Activated T-helper 1 cell treated with anti-CD3 and anti-CD28 coated beads, Interleukin-12 subunit alpha, Interleukin-12 subunit beta, Interleukin-2, Interleukin-4 antibody, amounts not matched to agents 30 ng/mL and 10 ng/mL and 1 ng/mL, durations not matched to agents 14 hours and 24 hours and 36 hours (primary cell): ENCODE measurements at regions of chr2 and their contacts with region 1.

Region 1: DNA sequence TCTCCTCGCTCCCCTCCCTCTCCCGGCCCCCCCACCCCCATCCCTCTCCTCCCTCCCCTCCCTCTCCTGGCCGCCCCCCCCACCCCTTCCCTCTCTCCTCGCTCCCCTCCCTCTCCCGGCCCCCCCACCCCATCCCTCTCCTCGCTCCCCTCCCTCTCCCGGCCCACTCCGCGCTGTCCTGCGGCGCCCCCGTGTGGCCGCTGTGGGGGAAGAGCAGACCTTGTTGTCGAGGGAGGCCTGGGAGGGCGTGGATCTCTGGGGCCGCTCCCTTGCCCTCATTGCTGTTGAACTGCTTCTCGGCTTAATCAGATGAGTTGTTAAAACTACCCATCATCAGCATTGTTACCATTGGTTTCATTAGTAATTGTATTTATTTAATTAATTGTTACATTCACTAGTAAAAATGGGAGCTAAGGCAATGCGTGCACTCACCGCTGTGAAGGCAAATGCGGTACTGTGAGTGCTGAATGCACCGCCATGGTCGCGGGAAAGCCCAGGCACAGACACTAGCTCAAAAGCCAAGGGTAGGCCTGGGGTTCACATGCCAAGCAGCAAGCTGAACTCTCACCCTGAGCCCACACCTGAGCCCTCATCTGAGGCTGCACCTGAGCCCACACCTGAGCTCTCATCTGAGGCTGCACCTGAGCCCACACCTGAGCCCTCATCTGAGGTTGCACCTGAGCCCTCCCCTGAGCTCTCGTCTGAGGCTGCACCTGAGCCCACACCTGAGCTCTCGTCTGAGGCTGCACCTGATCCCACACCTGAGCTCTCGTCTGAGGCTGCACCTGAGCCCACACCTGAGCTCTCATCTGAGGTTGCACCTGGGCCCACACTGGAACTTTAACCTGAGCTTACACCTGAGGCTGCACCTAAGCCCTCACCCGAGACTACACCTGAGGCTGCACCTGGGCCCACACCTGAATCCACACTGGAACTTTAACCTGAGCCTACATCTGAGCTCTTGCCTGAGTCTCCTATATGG is 8.8 kb downstream of the RTP5 start:
- DNase-seq: peak; percentile 73
- H3K4me3 Mint-ChIP-seq: no peak overlapping the region
- H3K27ac Mint-ChIP-seq: no peak overlapping the region
- H3K4me1 Mint-ChIP-seq: peaks cover 17% of the 10 kb centered on the region
- H3K27me3 Mint-ChIP-seq: no peaks in the 10 kb centered on the region

Region 2: GRCh38 chr2:240832205-240832727 is 1046.0 kb before region 1 on chr2:
- intact Hi-C with region 1: loop called (anchors 1 kb)
- DNase-seq: peak; percentile 97
- H3K4me3 Mint-ChIP-seq: no peak overlapping the region
- H3K27ac Mint-ChIP-seq: no peak overlapping the region
- H3K4me1 Mint-ChIP-seq: no peaks in the 10 kb centered on the region
- H3K27me3 Mint-ChIP-seq: peaks cover 27% of the 10 kb centered on the region

Region 3: GRCh38 chr2:241355983-241356870 is 522.1 kb before region 1 on chr2 and contains the start of gene FARP2:
- intact Hi-C with region 1: loop called (anchors 1 kb)
- DNase-seq: peak; percentile 95
- H3K4me3 Mint-ChIP-seq: peak within 1 kb of the TSS; percentile 84
- H3K27ac Mint-ChIP-seq: peak within 1 kb of the TSS; percentile 83
- H3K4me1 Mint-ChIP-seq: peaks cover 22% of the 10 kb centered on the region
- H3K27me3 Mint-ChIP-seq: peaks cover 2% of the 10 kb centered on the region
- total RNA-seq, gene FARP2: 36.6 and 40.9 TPM in 2 replicates

Region 4: GRCh38 chr2:241609859-241610793 is 268.2 kb before region 1 on chr2:
- intact Hi-C with region 1: loop called (anchors 5 kb)
- DNase-seq: peak; percentile 88
- H3K4me3 Mint-ChIP-seq: peak overlapping the region; percentile 78
- H3K27ac Mint-ChIP-seq: peak overlapping the region; percentile 83
- H3K4me1 Mint-ChIP-seq: peaks cover 18% of the 10 kb centered on the region
- H3K27me3 Mint-ChIP-seq: no peaks in the 10 kb centered on the region

Region 5: DNA sequence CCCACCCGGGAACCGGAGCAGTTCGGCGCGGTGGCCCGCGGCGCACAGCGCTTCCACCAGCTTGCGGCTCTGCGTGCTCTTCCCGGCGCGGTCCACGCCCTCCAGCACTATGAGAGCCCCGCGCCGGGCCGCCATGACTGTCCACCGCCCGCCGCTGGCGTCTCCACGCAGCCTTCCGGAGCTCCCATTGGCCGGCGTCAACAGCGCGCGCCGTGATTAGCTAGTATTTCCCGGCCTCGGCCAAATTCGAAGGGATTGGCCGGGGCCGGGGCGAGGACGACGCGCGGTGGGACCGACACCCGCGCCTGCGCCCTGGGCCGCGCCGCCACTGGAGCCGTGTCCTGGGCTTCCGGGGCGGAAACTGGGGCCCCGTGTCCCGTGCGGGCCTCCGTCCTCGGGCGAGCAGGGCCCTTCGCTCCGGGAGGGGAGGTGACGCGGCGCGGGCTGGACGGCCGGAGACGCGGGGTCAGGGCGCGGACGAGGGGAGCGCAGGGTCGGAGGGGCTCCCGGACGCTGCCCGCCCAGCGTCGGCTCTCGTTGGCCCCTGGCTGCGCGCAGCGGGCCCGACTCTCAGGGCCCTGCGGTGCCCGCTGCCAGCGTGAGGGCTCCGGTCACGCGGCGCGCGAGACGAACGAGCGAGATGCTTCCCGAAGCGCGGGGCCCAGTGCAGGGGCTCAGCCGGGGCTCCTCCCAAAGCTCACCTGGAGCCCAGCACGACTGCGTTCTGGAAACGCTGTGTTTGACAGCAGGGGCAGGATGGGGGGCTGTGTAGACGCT is 191.4 kb before region 1 on chr2 and contains the start of gene DTYMK:
- intact Hi-C with region 1: loop called (anchors 1 kb)
- DNase-seq: peak; percentile 97
- H3K4me3 Mint-ChIP-seq: peak within 1 kb of the TSS; percentile 96
- H3K27ac Mint-ChIP-seq: peak within 1 kb of the TSS; percentile 98
- H3K4me1 Mint-ChIP-seq: peaks cover 28% of the 10 kb centered on the region
- H3K27me3 Mint-ChIP-seq: no peaks in the 10 kb centered on the region
- total RNA-seq, gene DTYMK: 102 and 106 TPM in 2 replicates

Region 6: GRCh38 chr2:241844066-241844728 is 34.1 kb before region 1 on chr2:
- intact Hi-C with region 1: loop called (anchors 5 kb)
- DNase-seq: peak; percentile 79
- H3K4me3 Mint-ChIP-seq: peak overlapping the region; percentile 43
- H3K27ac Mint-ChIP-seq: peak overlapping the region; percentile 95
- H3K4me1 Mint-ChIP-seq: peaks cover 27% of the 10 kb centered on the region
- H3K27me3 Mint-ChIP-seq: peaks cover 8% of the 10 kb centered on the region

Region 7: GRCh38 chr2:241965931-241966412 is 87.7 kb after region 1 on chr2:
- intact Hi-C with region 1: no loop called
- DNase-seq: peak; percentile 21
- H3K4me3 Mint-ChIP-seq: peak overlapping the region; percentile 72
- H3K27ac Mint-ChIP-seq: peak overlapping the region; percentile 83
- H3K4me1 Mint-ChIP-seq: peaks cover 21% of the 10 kb centered on the region
- H3K27me3 Mint-ChIP-seq: no peaks in the 10 kb centered on the region